HCT116 (cell line): ENCODE measurements at regions of chr1 and their contacts with region 1.

Region 1: DNA sequence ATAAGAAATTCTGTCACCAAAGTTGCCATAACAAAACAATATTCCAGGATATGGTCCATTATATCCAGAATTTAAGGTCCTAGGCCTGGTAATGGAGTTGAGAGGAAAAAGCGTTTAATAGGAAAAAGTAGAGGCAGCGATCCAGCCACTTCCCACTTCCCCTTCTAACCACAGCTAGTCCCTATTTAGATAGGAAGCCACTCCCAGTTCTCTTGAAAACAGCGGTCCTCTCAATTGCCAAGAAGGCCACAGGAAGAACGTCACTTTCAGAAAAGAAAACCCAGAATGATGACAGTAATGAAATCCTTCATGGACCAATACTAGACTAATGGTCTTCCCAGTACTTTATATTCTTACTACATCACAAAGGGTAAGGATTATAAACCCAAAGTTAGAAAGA is 38.6 kb downstream of the ABL2 start:
- DNase-seq: no peak
- ATAC-seq: no peak
- H3K4me3 ChIP-seq: no peak overlapping the region
- H3K27ac ChIP-seq: no peak overlapping the region
- H3K4me1 ChIP-seq: no peaks in the 10 kb centered on the region
- H3K27me3 ChIP-seq: no peaks in the 10 kb centered on the region
- CTCF ChIP-seq: no peak
- POLR2A ChIP-seq: no peak
- RAD21 ChIP-seq: no peak

Region 2: GRCh38 chr1:179105350-179105749 is 85.5 kb before region 1 on chr1:
- CTCF ChIA-PET with region 1: no interaction called
- POLR2A ChIA-PET with region 1: no interaction called
- RAD21 ChIA-PET with region 1: no interaction called
- intact Hi-C with region 1: loop called (anchors 5 kb)
- DNase-seq: no peak
- ATAC-seq: peak; percentile 89
- H3K4me3 ChIP-seq: no peak overlapping the region
- H3K27ac ChIP-seq: no peak overlapping the region
- H3K4me1 ChIP-seq: no peaks in the 10 kb centered on the region
- H3K27me3 ChIP-seq: no peaks in the 10 kb centered on the region
- CTCF ChIP-seq: peak; percentile 59 to 68 (median 61); a peak in 5 of 6 replicates
- POLR2A ChIP-seq: no peak
- RAD21 ChIP-seq: peak; percentile 49

Region 3: GRCh38 chr1:179121159-179121938 is 69.5 kb before region 1 on chr1:
- CTCF ChIA-PET with region 1: interaction called, 15 read pairs
- POLR2A ChIA-PET with region 1: no interaction called
- RAD21 ChIA-PET with region 1: no interaction called
- intact Hi-C with region 1: loop called (anchors 2 kb)
- DNase-seq: peak; percentile 28
- ATAC-seq: peak; percentile 61; the same call in 1 of the 2 replicates
- H3K4me3 ChIP-seq: no peak overlapping the region
- H3K27ac ChIP-seq: no peak overlapping the region
- H3K4me1 ChIP-seq: peaks cover 0 to 13% of the 10 kb centered on the region in 2 experiments; a peak in 1 of 4 replicates
- H3K27me3 ChIP-seq: no peaks in the 10 kb centered on the region
- CTCF ChIP-seq: peak; percentile 61 to 70 (median 66); a peak in 5 of 6 replicates
- POLR2A ChIP-seq: no peak
- RAD21 ChIP-seq: peak; percentile 84